ENCODE measurements at regions of chr1 and their contacts with region 1.

Region 1: DNA sequence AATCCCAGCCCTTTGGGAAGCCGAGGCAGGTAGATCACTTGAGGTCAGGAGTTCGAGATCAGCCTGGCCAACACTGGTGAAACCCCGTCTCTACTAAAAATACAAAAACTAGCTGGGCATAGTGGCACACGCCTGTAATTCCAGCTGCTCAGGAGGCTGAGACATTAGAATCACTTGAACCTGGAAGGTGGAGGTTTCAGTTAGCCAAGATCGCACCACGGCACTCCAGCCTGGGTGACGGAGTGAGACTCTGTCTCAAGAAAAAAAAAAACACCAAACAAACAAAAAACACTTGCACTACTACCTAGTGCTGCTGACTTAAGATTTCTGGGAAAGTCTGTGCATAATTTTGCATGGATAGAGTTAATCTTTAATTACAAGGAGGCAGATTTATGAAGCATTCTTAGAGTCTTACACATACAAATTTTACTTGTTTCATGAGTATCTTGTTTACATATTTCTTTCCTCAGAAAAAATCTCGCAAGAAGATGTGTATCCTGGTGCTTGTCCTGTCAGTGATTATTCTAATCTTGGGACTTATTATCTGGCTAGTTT is 8.7 kb upstream of the PPP1R8 start:
- DNase-seq: no peak
- H3K4me3 ChIP-seq: no peak overlapping the region
- H3K27ac ChIP-seq: no peak overlapping the region
- H3K4me1 ChIP-seq: no peaks in the 10 kb centered on the region
- H3K27me3 ChIP-seq: no peaks in the 10 kb centered on the region
- CTCF ChIP-seq: no peak
- POLR2A ChIP-seq: no peak

Region 2: DNA sequence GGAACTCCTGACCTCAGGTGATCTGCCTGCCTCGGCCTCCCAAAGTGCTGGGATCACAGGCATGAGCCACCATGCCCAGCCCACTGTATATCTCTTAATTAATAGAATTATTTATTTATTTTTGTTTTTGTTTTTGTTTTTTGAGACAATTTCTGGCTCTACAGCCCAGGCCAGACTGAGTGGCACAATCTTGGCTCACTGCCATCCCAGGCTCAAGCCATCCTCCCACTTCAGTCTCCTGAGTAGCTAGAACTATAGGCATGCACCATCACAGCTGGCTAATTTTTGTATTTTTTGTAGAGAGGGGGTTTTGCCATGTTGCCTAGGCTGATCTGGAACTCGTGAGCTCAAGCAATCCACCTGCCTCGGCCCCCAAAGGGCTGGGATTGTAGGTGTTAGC is 603.1 kb before region 1 on chr1:
- intact Hi-C with region 1: no loop called
- DNase-seq: no peak
- H3K4me3 ChIP-seq: no peak overlapping the region
- H3K27ac ChIP-seq: no peak overlapping the region
- H3K4me1 ChIP-seq: no peaks in the 10 kb centered on the region
- H3K27me3 ChIP-seq: no peaks in the 10 kb centered on the region
- CTCF ChIP-seq: no peak
- POLR2A ChIP-seq: no peak

Region 3: DNA sequence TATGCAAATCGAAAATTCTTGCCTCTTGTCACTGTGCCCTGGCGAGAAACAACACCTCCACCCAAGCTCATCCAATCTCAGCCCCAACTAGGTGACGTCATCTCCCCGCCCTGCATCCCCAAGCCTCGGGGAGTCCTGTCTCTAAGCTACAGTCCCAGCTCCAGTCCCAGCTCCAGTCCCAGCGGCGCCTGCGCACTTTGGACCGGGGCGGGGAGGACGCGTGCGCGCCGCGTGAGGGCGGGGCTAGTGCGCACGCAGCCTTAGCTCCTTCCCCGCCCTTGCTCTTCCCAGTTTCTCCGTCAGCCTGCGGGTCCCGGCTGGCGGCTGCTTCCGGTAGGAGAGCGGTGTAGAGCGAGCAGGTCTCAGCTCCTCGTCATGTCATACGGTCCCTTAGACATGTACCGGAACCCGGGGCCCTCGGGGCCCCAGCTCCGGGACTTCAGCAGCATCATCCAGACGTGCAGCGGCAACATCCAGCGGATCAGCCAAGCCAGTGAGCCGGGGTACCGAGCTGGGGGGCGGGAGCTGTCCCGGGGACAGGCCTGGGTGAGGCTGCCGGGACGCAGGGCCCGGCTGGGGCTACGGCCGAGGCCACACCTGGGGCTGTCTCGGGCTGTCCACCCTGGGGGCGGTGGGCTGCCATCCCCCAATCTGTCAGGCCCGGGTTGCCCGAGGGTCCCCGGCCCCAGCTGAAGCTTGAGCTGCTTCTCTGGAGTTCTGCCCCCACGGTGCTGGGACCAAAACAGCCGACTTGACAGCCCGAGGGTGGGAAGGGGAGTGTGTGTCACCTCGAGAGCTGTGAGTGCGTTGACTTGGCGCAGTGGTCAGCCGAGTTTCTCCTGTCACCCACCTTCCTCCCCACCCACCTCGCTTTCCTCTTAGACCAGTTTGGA is 48.7 kb before region 1 on chr1 and contains the start of gene STX12:
- intact Hi-C with region 1: loop called (anchors 10 kb)
- DNase-seq: peak; percentile 98
- H3K4me3 ChIP-seq: peak within 1 kb of the TSS; percentile 80 to 93
- H3K27ac ChIP-seq: peak within 1 kb of the TSS; percentile 92 to 94
- H3K4me1 ChIP-seq: peaks cover 4% of the 10 kb centered on the region
- H3K27me3 ChIP-seq: no peaks in the 10 kb centered on the region
- CTCF ChIP-seq: no peak
- POLR2A ChIP-seq: peak; percentile 70
- total RNA-seq, gene STX12: 39.1 to 46.7 TPM

Measured in testis (tissue), 5 donors.